ENCODE measurements at regions of chr14 and their contacts with region 1.

Region 1: GRCh38 chr14:65412032-65412846 is at the start of gene FUT8:
- H3K4me3 Mint-ChIP-seq: peak within 1 kb of the TSS; percentile 95
- H3K27ac Mint-ChIP-seq: peak within 1 kb of the TSS; percentile 89
- H3K4me1 Mint-ChIP-seq: peaks cover 13% of the 10 kb centered on the region
- H3K27me3 Mint-ChIP-seq: peaks cover 16% of the 10 kb centered on the region

Region 2: DNA sequence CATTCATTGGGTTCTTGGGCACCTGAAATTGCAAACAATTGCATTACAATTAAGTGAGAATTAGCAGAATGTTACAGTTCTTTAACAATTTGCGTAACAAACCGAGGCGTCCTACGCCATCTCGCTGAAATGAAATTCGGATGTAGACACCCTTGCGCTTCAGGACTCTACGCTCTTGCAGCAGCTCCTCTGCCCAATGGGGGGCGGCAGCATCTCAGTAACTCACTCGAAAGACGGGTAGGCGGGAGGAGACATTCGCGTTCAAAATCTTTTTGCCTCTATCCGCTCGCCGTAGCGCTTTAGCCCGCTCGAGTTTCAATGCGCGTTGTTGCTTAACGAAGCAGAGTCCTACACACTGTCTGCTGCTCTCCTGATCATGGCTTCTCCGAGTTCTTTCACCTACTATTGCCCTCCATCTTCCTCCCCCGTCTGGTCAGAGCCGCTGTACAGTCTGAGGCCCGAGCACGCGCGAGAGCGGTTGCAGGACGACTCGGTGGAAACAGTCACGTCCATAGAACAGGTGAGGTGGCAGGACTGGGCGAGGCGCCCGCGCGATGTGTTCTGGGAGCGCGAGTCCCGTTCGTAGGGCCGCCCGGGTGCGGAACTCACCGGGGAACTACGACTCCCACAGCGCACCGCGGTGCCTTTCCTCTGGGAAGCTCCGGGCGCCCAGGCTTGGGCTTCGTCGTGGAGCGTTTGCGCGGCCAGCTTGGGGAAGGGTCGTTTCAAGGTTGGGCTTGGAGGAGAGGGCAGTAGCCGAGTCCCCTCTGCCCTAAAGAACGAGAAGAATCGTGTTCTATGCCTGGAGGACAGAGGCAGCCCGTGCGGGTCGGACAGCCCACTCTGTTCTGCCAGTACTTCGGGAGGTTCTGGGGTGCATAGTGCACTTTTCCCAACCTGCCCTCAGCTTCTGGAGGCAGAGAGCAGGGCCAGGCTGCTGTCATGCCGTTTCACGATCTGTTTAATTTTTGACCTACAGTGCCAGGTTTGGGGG is 425.4 kb before region 1 on chr14 and contains the start of gene FNTB:
- intact Hi-C with region 1: loop called (anchors 2 kb)
- H3K4me3 Mint-ChIP-seq: peak within 1 kb of the TSS; percentile 99
- H3K27ac Mint-ChIP-seq: peak within 1 kb of the TSS; percentile 96
- H3K4me1 Mint-ChIP-seq: peaks cover 31% of the 10 kb centered on the region
- H3K27me3 Mint-ChIP-seq: peaks cover 14% of the 10 kb centered on the region

Region 3: GRCh38 chr14:65206448-65207096 is 205.7 kb before region 1 on chr14:
- intact Hi-C with region 1: loop called (anchors 5 kb)
- H3K4me3 Mint-ChIP-seq: no peak overlapping the region
- H3K27ac Mint-ChIP-seq: peak overlapping the region; percentile 87
- H3K4me1 Mint-ChIP-seq: peaks cover 63% of the 10 kb centered on the region
- H3K27me3 Mint-ChIP-seq: peaks cover 9% of the 10 kb centered on the region

Region 4: DNA sequence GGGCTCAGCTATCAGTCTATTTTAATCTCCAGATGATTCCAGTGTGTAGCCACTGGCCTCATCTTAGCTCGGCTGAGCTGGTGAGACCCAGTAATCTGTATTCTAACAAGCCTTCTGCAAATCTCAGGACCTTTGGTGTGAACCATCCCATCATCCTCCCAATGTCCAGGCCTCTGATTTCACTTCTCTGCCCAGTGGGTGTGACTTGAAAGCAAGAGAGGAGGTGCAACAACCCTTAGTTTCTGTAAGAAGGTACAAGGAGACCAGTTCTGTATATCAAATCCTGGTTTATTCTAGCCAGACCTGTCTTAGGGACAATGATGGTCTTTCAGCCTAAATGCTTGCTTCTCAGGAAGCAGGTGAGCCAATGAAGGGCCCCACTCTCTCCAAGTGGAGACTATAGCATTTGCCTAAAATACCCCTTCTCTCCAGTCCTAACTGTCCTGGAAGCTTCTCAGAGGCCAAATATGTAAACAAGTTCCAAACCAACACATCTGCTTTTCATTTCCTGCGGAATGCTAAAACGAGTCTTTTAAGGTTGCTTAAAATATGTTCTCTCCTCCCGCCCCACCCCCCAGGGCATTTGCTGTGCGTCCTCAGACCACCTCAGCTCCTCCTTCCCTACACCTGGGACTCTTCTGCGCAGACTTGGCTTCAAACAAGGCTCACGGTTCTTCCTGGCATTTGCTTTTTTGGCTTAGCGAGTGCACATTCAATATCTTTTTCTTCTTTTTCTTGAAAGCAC is 78.1 kb before region 1 on chr14:
- intact Hi-C with region 1: loop called (anchors 5 kb)
- H3K4me3 Mint-ChIP-seq: no peak overlapping the region
- H3K27ac Mint-ChIP-seq: no peak overlapping the region
- H3K4me1 Mint-ChIP-seq: peaks cover 35% of the 10 kb centered on the region
- H3K27me3 Mint-ChIP-seq: peaks cover 75% of the 10 kb centered on the region

Region 5: GRCh38 chr14:65958664-65959562 is 546.7 kb after region 1 on chr14:
- intact Hi-C with region 1: loop called (anchors 1 kb)
- H3K4me3 Mint-ChIP-seq: no peak overlapping the region
- H3K27ac Mint-ChIP-seq: no peak overlapping the region
- H3K4me1 Mint-ChIP-seq: peaks cover 5% of the 10 kb centered on the region
- H3K27me3 Mint-ChIP-seq: no peaks in the 10 kb centered on the region

Measured in dendritic cell treated with granulocyte-macrophage colony-stimulating factor and Interleukin-4, amounts not matched to agents 40 ng/mL and 50 ng/mL, for 4 days (primary cell).